H1 (cell line): ENCODE measurements at regions of chr18 and their contacts with region 1.

Region 1: DNA sequence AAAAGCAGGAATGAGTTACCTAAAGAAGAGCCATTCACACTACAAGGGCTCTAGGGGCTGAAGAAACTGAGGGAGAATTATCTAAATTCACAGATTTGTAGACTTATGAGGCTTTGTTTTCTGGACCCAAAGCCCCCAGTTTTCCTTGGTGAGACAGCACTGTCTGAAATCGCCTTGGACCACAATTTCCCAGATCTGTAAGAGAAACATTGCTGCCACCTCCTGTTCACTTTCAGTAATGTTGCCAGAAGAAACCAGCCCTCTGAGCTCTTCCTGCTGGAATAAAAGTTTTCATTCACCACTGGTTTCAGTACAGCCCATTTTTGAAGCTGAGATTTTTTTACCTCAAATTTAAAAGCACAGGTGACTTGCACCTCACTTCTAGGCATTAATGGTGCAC is 169.2 kb downstream of the CDH20 start:
- DNase-seq: peak in 1 of 2 experiments; percentile 64
- H3K4me3 ChIP-seq: no peak overlapping the region
- H3K27ac ChIP-seq: no peak overlapping the region
- H3K4me1 ChIP-seq: peaks cover 0 to 2% (median under 1%) of the 10 kb centered on the region in 4 experiments; a peak in 2 of 7 replicates
- H3K27me3 ChIP-seq: no peaks in the 10 kb centered on the region; a peak in 1 of 7 replicates
- CTCF ChIP-seq: peak in 2 of 3 experiments; percentile 75 to 84; a peak in 3 of 4 replicates
- EP300 ChIP-seq: no peak
- POLR2A ChIP-seq: no peak
- RAD21 ChIP-seq: peak; percentile 92 to 93

Region 2: DNA sequence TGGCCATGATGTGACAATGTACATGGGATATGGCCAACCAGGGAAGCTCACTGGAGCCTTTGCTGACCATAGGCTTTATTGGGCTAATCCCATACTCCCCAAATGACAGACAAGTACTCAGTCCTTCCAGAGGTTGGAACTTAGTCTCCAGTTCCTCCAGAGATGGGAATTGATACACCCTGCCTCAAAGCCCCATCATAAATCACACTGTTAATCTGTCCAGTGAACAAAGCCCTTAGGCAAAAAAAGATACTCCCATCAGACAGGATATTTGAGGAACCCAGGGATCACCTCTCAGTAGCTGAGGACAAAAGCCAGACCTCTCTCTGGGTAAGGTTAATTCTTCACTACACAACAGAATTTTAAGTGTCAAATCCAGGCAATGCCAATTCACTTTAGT is 416.7 kb before region 1 on chr18:
- CTCF ChIA-PET with region 1: interaction called, 17 read pairs
- POLR2A ChIA-PET with region 1: no interaction called
- DNase-seq: no peak
- H3K4me3 ChIP-seq: no peak overlapping the region
- H3K27ac ChIP-seq: no peak overlapping the region
- H3K4me1 ChIP-seq: no peaks in the 10 kb centered on the region
- H3K27me3 ChIP-seq: no peaks in the 10 kb centered on the region
- CTCF ChIP-seq: no peak
- EP300 ChIP-seq: no peak
- POLR2A ChIP-seq: no peak
- RAD21 ChIP-seq: peak in 1 of 2 experiments; percentile 16; a peak in 2 of 4 replicates

Region 3: GRCh38 chr18:61333746-61334490 is 168.6 kb before region 1 on chr18:
- CTCF ChIA-PET with region 1: interaction called, 266 read pairs
- POLR2A ChIA-PET with region 1: no interaction called
- DNase-seq: peak in 1 of 2 experiments; percentile 79
- H3K4me3 ChIP-seq: peak overlapping the region; percentile 50 to 73 (median 65)
- H3K27ac ChIP-seq: no peak overlapping the region
- H3K4me1 ChIP-seq: no peaks in the 10 kb centered on the region; a peak in 1 of 7 replicates
- H3K27me3 ChIP-seq: peaks cover 0 to 25% (median 15%) of the 10 kb centered on the region in 4 experiments; a peak in 6 of 7 replicates
- CTCF ChIP-seq: no peak
- EP300 ChIP-seq: no peak
- POLR2A ChIP-seq: no peak
- RAD21 ChIP-seq: no peak; a peak in 1 of 4 replicates

Region 4: GRCh38 chr18:61489334-61489733 is 13.1 kb before region 1 on chr18:
- CTCF ChIA-PET with region 1: interaction called, 20 read pairs
- POLR2A ChIA-PET with region 1: no interaction called
- DNase-seq: no peak
- H3K4me3 ChIP-seq: no peak overlapping the region
- H3K27ac ChIP-seq: no peak overlapping the region
- H3K4me1 ChIP-seq: peaks cover 0 to 5% (median 0%) of the 10 kb centered on the region in 4 experiments; a peak in 1 of 7 replicates
- H3K27me3 ChIP-seq: no peaks in the 10 kb centered on the region
- CTCF ChIP-seq: no peak
- EP300 ChIP-seq: no peak
- POLR2A ChIP-seq: no peak
- RAD21 ChIP-seq: no peak